Dorsolateral prefrontal cortex (tissue), 120 donors: ENCODE measurements at regions of chr6 and their contacts with region 1.

Region 1: GRCh38 chr6:97053643-97054411 is 129.3 kb downstream of the KLHL32 start:
- DNase-seq: no peak
- H3K4me3 ChIP-seq: peak overlapping the region in 1 of 59 donors; percentile 15
- H3K27ac ChIP-seq: peak overlapping the region in 56 of 59 donors; percentile 0 to 98 (median 92)
- H3K27me3 ChIP-seq: no peaks in the 10 kb centered on the region
- CTCF ChIP-seq: peak; percentile 63 to 90 (median 80)

Region 2: GRCh38 chr6:96923871-96924493 is 129.8 kb before region 1 on chr6:
- intact Hi-C with region 1: loop called (anchors 2 kb)
- DNase-seq: no peak
- H3K4me3 ChIP-seq: peak overlapping the region; percentile 43 to 97 (median 87)
- H3K27ac ChIP-seq: peak overlapping the region; percentile 67 to 98 (median 96)
- H3K27me3 ChIP-seq: no peaks in the 10 kb centered on the region
- CTCF ChIP-seq: peak in 3 of 56 donors; percentile 0 to 17 (median 2)

Region 3: DNA sequence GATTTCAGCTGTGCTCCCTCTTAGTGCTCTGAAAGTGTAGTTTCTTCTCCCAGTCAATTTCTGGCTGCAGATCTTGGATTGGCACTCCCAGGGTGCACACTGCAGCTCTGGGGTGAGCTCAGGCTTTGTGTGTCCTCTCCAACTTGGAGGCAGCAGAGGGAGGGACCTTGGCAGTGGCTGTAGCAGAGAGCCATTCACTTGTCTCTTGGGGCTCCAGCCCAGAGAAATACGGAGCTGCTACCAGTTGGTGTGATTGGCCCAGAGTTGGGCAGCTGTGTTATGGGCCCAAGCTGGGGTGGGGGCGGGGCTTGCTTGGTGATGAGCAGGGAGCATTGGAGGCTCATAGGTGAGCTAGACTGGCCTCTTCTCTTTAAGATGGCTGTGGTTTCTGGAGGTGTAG is 63.4 kb before region 1 on chr6:
- intact Hi-C with region 1: loop called in 1 of 2 experiments (anchors 5 kb)
- DNase-seq: peak in 7 of 10 donors; percentile 59 to 74 (median 72)
- H3K4me3 ChIP-seq: peak overlapping the region in 3 of 59 donors; percentile 4 to 8 (median 7)
- H3K27ac ChIP-seq: peak overlapping the region in 57 of 59 donors; percentile 18 to 88 (median 76)
- H3K27me3 ChIP-seq: no peaks in the 10 kb centered on the region
- CTCF ChIP-seq: no peak

Region 4: GRCh38 chr6:97009781-97010492 is 43.9 kb before region 1 on chr6:
- intact Hi-C with region 1: loop called (anchors 5 kb)
- DNase-seq: peak in 8 of 10 donors; percentile 51 to 72 (median 64)
- H3K4me3 ChIP-seq: peak overlapping the region in 35 of 59 donors; percentile 0 to 52 (median 20)
- H3K27ac ChIP-seq: peak overlapping the region; percentile 65 to 98 (median 92)
- H3K27me3 ChIP-seq: no peaks in the 10 kb centered on the region
- CTCF ChIP-seq: peak in 10 of 56 donors; percentile 10 to 44 (median 14)

Region 5: DNA sequence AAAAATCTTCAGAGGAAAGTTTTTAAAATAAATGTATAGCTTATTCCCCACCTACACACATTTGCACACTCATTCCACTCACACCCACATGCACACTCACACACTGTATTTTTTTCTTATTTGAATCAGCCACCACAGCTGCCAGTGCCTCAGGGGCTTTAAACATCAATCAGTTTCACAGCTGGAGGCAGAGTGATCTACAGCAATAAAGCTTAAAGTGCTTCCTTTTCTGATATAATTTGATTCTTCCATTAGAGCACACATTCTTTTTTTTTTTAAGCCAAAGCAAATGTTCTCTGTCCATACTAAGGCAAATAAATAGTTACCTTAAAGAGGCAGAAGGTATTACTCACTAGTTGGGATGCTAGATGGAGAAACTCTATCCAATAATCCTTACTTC is 1281.8 kb after region 1 on chr6:
- intact Hi-C with region 1: no loop called
- DNase-seq: no peak
- H3K4me3 ChIP-seq: no peak overlapping the region
- H3K27ac ChIP-seq: no peak overlapping the region
- H3K27me3 ChIP-seq: no peaks in the 10 kb centered on the region
- CTCF ChIP-seq: no peak